ENCODE measurements at regions of chr1 and their contacts with region 1.

Region 1: GRCh38 chr1:54810100-54810942 is 9.2 kb upstream of the TTC22 start:
- DNase-seq: peak; percentile 38
- H3K4me3 ChIP-seq: no peak overlapping the region
- H3K27ac ChIP-seq: no peak overlapping the region
- H3K4me1 ChIP-seq: peaks cover 14% of the 10 kb centered on the region
- H3K27me3 ChIP-seq: no peaks in the 10 kb centered on the region
- CTCF ChIP-seq: peak; percentile 92 to 97

Region 2: DNA sequence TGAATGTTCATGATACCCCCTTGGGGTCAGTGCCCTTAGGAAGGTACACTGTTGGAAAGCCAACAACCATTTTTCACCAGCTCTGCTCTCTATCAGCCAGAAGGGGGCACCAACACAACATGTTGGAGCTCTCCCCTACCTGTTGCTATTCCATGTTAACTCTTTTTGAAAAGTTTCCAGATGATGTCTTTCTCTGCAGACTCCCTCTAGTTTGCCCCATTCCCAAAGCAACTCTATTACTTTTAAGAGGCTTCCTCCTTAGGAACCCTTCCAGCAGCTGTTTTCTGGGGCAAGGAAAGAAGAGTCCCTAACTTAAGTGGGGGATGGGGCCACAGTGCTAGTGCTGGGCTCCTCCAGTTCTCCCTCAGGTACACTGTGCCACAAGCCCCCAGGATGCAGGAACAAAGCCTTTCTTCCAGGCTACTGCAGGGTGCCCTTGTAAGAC is 949.3 kb before region 1 on chr1:
- CTCF ChIA-PET with region 1: no interaction called
- dilution Hi-C with region 1: no loop called
- in situ Hi-C with region 1: loop called in 1 of 2 experiments (anchors 25 kb)
- intact Hi-C with region 1: loop called (anchors 1 kb)
- DNase-seq: peak; percentile 30
- H3K4me3 ChIP-seq: no peak overlapping the region
- H3K27ac ChIP-seq: no peak overlapping the region
- H3K4me1 ChIP-seq: no peaks in the 10 kb centered on the region
- H3K27me3 ChIP-seq: no peaks in the 10 kb centered on the region
- CTCF ChIP-seq: peak; percentile 72 to 85

Region 3: DNA sequence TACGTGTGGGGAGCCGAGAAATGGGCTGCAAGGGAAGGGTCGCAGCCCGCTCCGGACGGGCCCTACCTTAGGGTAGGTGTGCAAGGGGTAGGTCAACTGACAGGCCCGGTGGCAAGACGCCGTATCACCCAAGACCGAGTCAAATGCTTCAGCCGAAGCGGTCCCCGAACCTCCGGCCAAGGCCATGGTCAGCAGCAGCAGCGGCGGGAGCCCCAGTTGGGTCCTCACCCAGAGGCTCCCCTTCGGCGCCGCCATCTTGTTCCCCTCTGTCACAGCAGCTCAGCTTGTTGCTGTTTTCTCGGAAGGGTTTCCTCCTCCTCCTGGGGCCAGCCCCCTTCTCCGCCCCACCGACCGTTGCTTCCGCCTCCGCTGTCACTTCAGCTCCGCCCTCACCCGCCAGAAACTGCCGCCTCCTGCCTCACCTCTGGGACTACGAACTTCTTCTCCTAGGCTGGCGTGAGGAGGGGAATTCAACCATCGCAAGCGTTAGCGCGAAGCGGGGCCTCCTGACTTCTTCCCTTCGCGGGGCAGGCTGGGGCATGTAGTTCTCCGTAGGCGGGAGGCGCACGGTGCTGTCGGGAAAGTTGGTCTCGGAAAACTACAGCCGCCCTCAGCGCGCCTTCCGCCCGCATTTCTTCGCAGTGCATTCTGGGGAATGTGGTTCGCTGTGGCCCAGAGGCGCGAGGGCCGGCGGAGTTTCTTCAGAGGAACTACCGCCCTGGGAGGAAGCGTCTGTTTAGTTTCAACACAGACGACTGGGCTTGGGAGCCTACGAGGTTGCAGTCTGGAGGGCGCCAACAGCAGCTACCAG is 757.2 kb before region 1 on chr1 and contains the starts of genes TCEANC2 and TMEM59:
- CTCF ChIA-PET with region 1: no interaction called
- dilution Hi-C with region 1: no loop called
- in situ Hi-C with region 1: loop called in 1 of 2 experiments (anchors 25 kb)
- intact Hi-C with region 1: no loop called
- DNase-seq: peak; percentile 100
- H3K4me3 ChIP-seq: peak within 1 kb of the TSS; percentile 82 to 90 (median 89)
- H3K27ac ChIP-seq: peak within 1 kb of the TSS; percentile 91
- H3K4me1 ChIP-seq: peaks cover 6% of the 10 kb centered on the region
- H3K27me3 ChIP-seq: no peaks in the 10 kb centered on the region
- CTCF ChIP-seq: no peak
- total RNA-seq, gene TCEANC2: 3.8 to 5.5 TPM
- total RNA-seq, gene TMEM59: 164 to 223 TPM

Region 4: GRCh38 chr1:54070171-54070837 is 740.0 kb before region 1 on chr1:
- CTCF ChIA-PET with region 1: no interaction called
- dilution Hi-C with region 1: no loop called
- in situ Hi-C with region 1: loop called in 1 of 2 experiments (anchors 25 kb)
- intact Hi-C with region 1: loop called (anchors 1 kb)
- DNase-seq: peak; percentile 28
- H3K4me3 ChIP-seq: no peak overlapping the region
- H3K27ac ChIP-seq: no peak overlapping the region
- H3K4me1 ChIP-seq: no peaks in the 10 kb centered on the region
- H3K27me3 ChIP-seq: no peaks in the 10 kb centered on the region
- CTCF ChIP-seq: peak; percentile 76 to 79

Region 5: DNA sequence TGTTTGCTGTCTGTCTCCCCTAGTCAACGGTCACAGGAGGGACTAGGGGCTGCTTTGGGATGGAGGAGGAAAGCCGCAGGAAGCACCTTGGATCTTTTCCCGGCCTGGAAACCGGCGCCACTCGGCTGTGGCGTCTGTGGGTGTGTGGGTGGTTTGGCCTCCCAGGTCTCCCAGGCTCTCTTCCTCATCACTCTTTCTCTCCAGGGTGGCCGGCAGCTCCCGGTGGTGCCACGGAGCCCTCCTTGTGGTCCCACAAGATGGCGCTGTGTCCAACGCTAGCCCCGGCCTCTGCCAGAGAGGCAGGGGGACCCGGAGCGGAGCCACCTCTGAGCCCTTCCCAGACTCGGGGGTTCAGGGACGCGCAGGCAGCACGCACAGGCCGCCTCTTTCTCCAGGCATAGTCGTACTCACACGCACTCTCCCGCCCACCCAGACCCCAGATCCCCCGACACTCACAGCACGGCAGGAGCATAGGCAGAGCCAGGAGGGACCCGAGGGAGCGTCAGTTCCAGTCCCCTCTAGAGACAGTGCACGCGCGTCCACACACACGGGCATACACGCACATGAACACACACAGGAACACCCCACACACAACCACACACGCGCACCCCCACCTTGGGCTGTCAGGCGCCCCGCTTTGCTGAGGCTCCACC is 688.7 kb before region 1 on chr1:
- CTCF ChIA-PET with region 1: no interaction called
- dilution Hi-C with region 1: no loop called
- in situ Hi-C with region 1: loop called in 1 of 2 experiments (anchors 25 kb)
- intact Hi-C with region 1: loop called (anchors 1 kb)
- DNase-seq: peak; percentile 44
- H3K4me3 ChIP-seq: peak overlapping the region in 2 of 3 experiments; percentile 6 to 22
- H3K27ac ChIP-seq: no peak overlapping the region
- H3K4me1 ChIP-seq: peaks cover 8% of the 10 kb centered on the region
- H3K27me3 ChIP-seq: no peaks in the 10 kb centered on the region
- CTCF ChIP-seq: peak; percentile 57 to 79

Region 6: DNA sequence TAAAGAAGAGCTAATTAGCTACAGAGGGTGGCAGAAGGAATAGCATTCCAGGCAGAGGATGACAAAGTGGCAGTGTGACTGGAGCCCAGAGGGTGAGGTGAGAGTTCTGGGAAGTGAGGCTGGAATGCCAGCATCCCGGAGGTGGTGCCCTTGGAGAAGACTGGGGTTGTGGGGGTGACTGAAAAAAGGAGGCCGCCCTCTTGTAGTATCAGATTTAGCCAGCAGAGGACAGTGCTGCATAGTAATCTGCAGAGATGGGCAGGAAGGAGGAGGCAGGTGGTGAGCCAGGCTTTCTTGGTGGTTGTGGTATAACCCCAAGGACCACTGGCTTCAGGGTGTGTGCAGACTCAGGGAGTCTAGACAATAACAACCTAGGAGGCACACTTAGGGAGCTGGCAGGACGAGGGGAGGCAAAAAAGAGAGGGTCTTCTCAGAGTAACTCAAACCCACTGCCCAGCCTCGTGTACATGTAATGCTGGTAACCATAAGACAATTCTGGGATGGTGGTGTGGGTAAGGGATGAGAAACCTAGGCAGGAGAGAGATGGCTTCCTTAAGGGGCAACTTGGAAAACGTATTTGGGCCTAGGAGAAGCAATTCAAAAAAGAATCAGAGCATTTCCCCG is 138.2 kb before region 1 on chr1:
- CTCF ChIA-PET with region 1: no interaction called
- dilution Hi-C with region 1: no loop called
- in situ Hi-C with region 1: no loop called
- intact Hi-C with region 1: loop called (anchors 1 kb)
- DNase-seq: peak; percentile 41
- H3K4me3 ChIP-seq: no peak overlapping the region
- H3K27ac ChIP-seq: no peak overlapping the region
- H3K4me1 ChIP-seq: no peaks in the 10 kb centered on the region
- H3K27me3 ChIP-seq: peaks cover 3% of the 10 kb centered on the region
- CTCF ChIP-seq: peak; percentile 94 to 96

Region 7: DNA sequence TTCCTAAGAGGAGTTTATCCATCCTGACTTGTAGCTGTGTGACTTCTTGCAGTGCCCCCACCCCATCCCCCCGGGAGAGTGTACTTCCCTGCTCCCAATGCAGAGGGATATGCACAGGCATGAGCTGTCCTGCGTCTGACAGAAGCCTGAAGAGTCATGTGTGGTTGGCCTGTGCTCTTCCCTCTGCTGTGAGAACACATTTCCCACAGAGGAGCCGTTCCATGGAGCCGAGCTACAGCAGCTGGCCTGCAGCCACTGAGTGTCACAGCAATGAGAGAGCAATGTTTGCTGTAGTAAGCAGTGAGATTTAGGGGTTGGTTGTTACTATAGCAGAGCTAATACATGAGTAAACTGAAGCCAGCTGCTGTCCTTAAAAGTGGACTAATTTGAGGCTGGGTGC is 68.0 kb before region 1 on chr1:
- CTCF ChIA-PET with region 1: no interaction called
- dilution Hi-C with region 1: no loop called
- in situ Hi-C with region 1: no loop called
- intact Hi-C with region 1: no loop called
- DNase-seq: no peak
- H3K4me3 ChIP-seq: no peak overlapping the region
- H3K27ac ChIP-seq: no peak overlapping the region
- H3K4me1 ChIP-seq: no peaks in the 10 kb centered on the region
- H3K27me3 ChIP-seq: no peaks in the 10 kb centered on the region
- CTCF ChIP-seq: no peak